H1 (cell line): ENCODE measurements at regions of chr16 and their contacts with region 1.

Region 1: GRCh38 chr16:67246934-67247697 is at the start of gene FHOD1:
- DNase-seq: peak; percentile 84 to 100
- H3K4me3 ChIP-seq: peak within 1 kb of the TSS; percentile 67 to 87 (median 70)
- H3K27ac ChIP-seq: peak within 1 kb of the TSS; percentile 85
- H3K4me1 ChIP-seq: peaks cover 9 to 30% (median 13%) of the 10 kb centered on the region in 4 experiments
- H3K27me3 ChIP-seq: peaks cover 0 to 21% (median 13%) of the 10 kb centered on the region in 4 experiments; a peak in 5 of 7 replicates
- CTCF ChIP-seq: no peak
- EP300 ChIP-seq: no peak
- POLR2A ChIP-seq: peak in 1 of 2 experiments; percentile 90; a peak in 1 of 3 replicates
- RAD21 ChIP-seq: no peak
- total RNA-seq, gene FHOD1: 55.4 and 60.7 TPM in 2 replicates

Region 2: GRCh38 chr16:67226804-67227557 is 20.1 kb before region 1 on chr16 and contains the start of gene TMEM208:
- CTCF ChIA-PET with region 1: interaction called, 8 read pairs
- POLR2A ChIA-PET with region 1: interaction called, 111 read pairs
- DNase-seq: peak; percentile 96 to 99
- H3K4me3 ChIP-seq: peak within 1 kb of the TSS; percentile 83 to 96 (median 94)
- H3K27ac ChIP-seq: peak within 1 kb of the TSS; percentile 74
- H3K4me1 ChIP-seq: peaks cover 0 to 6% (median 3%) of the 10 kb centered on the region in 4 experiments; a peak in 3 of 7 replicates
- H3K27me3 ChIP-seq: no peaks in the 10 kb centered on the region; a peak in 4 of 7 replicates
- CTCF ChIP-seq: peak in 2 of 3 experiments; percentile 17 to 27; a peak in 3 of 4 replicates
- EP300 ChIP-seq: no peak
- POLR2A ChIP-seq: peak; percentile 66 to 94
- RAD21 ChIP-seq: no peak
- total RNA-seq, gene TMEM208: 37.7 and 37.9 TPM in 2 replicates

Region 3: DNA sequence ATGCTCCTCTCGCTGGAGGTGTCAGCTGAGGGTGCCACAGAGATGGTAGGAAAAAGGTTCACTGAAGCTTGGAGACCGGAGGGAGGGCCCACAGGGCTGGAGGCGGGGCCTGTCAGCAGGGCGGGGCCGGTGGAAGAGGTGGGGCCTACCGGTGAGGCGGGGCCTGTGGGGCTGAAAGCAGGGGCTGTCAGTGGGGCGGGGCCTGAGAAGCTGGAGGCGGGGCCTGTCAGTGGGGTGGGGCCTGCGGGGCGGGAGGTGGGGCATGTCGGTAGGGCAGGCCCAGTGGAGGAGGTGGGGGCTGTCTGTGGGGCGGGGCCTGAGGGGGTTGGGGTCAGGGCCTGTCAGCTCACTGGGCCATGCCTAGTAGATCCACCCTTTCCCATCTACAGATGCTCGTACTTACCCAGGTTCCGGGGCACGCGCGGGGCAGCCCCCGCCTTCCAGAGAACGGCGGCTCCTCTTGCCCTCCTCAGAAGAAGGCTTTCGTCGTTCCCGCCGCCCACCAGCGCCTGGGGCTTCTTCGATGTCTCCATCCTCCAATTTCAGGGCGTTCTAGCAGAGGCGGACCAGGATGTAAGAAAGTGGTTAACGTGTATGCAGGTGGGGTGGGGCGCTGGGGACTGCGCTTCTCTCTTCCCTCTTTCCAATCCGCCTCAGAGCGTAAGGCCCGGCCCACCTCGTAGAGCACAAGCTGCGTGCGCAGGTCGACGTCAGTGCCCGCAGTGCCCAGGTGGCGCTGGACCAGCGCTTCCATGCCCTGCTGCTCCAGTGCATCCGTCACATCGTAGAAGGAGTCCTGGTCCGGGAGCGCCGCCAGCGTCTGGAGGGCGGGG is 10.3 kb before region 1 on chr16:
- CTCF ChIA-PET with region 1: interaction called, 12 read pairs
- POLR2A ChIA-PET with region 1: interaction called, 111 read pairs
- DNase-seq: peak; percentile 77 to 98
- H3K4me3 ChIP-seq: no peak overlapping the region
- H3K27ac ChIP-seq: no peak overlapping the region
- H3K4me1 ChIP-seq: peaks cover 3 to 8% (median 7%) of the 10 kb centered on the region in 4 experiments; a peak in 6 of 7 replicates
- H3K27me3 ChIP-seq: no peaks in the 10 kb centered on the region
- CTCF ChIP-seq: no peak
- EP300 ChIP-seq: no peak
- POLR2A ChIP-seq: no peak
- RAD21 ChIP-seq: no peak

Region 4: DNA sequence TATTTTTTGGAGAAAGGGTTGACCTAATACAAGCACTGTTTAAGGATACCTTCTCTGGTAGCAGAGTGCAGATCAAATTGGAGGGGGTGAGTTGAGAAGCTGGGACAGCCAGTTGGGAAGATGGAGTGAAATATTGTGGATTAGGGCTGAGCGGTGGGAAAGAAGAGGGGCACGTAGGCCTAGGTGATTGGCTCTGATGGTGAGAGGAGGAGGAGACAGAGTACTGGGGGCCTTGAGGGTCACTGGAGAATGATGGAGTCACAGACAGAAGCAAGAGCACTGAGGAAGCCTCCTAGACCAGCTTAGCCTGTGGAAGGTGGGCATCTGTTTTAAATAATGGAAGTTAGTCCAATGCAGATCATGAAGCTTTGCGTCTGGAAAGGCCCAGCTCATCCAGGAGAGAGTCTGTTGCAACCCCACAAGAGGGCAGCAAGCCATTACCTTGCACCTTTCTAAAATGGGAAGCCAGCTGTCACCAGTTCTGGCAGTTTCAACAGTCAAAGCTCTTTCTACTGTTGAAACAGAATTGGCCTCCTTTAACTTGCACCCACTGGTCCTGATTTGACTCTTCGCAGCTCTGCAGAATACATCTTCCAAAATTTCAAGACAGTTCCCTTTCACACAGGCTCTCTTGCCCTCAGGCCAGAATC is 13.4 kb after region 1 on chr16:
- CTCF ChIA-PET with region 1: interaction called, 33 read pairs
- POLR2A ChIA-PET with region 1: interaction called, 12 read pairs
- DNase-seq: no peak
- H3K4me3 ChIP-seq: no peak overlapping the region
- H3K27ac ChIP-seq: no peak overlapping the region
- H3K4me1 ChIP-seq: no peaks in the 10 kb centered on the region; a peak in 1 of 7 replicates
- H3K27me3 ChIP-seq: no peaks in the 10 kb centered on the region; a peak in 1 of 7 replicates
- CTCF ChIP-seq: peak; percentile 55 to 71 (median 68)
- EP300 ChIP-seq: no peak
- POLR2A ChIP-seq: no peak
- RAD21 ChIP-seq: peak; percentile 69 to 79

Region 5: GRCh38 chr16:67279296-67280089 is 32.4 kb after region 1 on chr16 and contains the start of gene PLEKHG4:
- CTCF ChIA-PET with region 1: interaction called, 15 read pairs
- POLR2A ChIA-PET with region 1: interaction called, 12 read pairs
- DNase-seq: peak; percentile 27 to 83
- H3K4me3 ChIP-seq: peak within 1 kb of the TSS; percentile 37 to 70 (median 44)
- H3K27ac ChIP-seq: no peak within 1 kb of the TSS
- H3K4me1 ChIP-seq: 0 out of 7 replicates have a peak, but pooled peaks cover 0 to under 1% (median 0%) of the 10 kb centered on the region in 4 experiments
- H3K27me3 ChIP-seq: peaks cover 0 to 15% (median 12%) of the 10 kb centered on the region in 4 experiments; a peak in 5 of 7 replicates
- CTCF ChIP-seq: peak; percentile 78 to 98 (median 83)
- EP300 ChIP-seq: peak in 1 of 2 experiments; percentile 41; a peak in 1 of 3 replicates
- POLR2A ChIP-seq: no peak
- RAD21 ChIP-seq: peak; percentile 48 to 73
- total RNA-seq, gene PLEKHG4: 7.4 and 7.7 TPM in 2 replicates

Region 6: GRCh38 chr16:67311607-67312488 is 64.7 kb after region 1 on chr16:
- CTCF ChIA-PET with region 1: no interaction called
- POLR2A ChIA-PET with region 1: no interaction called
- DNase-seq: no peak
- H3K4me3 ChIP-seq: no peak overlapping the region
- H3K27ac ChIP-seq: no peak overlapping the region
- H3K4me1 ChIP-seq: no peaks in the 10 kb centered on the region
- H3K27me3 ChIP-seq: no peaks in the 10 kb centered on the region
- CTCF ChIP-seq: no peak
- EP300 ChIP-seq: no peak
- POLR2A ChIP-seq: no peak
- RAD21 ChIP-seq: no peak